Caco-2 (cell line): ENCODE measurements at regions of chr4 and their contacts with region 1.

Region 1: DNA sequence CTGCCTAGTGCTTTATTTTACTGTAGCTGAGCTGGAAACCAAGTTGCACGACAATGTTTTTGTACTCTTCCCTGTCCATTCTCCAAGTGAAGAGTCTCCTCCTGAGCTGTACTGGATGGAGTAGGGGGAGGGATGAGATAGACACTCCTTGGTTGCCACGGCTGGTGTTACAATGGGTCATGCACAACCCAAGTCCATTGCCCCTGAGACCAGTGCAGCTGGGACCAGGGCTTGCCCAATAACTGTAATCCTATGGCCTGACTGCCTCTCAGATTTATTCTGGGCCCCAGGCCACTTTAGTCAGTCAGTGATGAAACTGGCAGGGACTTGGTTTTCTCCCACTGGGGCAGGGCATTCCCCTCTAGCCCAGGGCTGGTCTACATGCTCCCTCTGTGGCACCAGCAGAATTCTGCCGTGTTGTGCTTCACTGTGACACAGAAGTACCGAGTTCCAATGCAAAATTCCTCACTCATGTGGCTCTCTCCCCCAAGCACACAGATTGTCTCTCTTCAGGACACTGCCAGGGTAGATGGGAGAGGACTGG is 203.3 kb upstream of the PCDH18 start:
- DNase-seq: no peak
- H3K4me3 ChIP-seq: no peak overlapping the region
- H3K4me3 Mint-ChIP-seq: no peak overlapping the region
- H3K27ac Mint-ChIP-seq: no peak overlapping the region
- H3K4me1 ChIP-seq: no peaks in the 10 kb centered on the region
- H3K4me1 Mint-ChIP-seq: peaks cover 6% of the 10 kb centered on the region
- H3K27me3 ChIP-seq: no peaks in the 10 kb centered on the region
- H3K27me3 Mint-ChIP-seq: no peaks in the 10 kb centered on the region
- CTCF ChIP-seq: no peak

Region 2: DNA sequence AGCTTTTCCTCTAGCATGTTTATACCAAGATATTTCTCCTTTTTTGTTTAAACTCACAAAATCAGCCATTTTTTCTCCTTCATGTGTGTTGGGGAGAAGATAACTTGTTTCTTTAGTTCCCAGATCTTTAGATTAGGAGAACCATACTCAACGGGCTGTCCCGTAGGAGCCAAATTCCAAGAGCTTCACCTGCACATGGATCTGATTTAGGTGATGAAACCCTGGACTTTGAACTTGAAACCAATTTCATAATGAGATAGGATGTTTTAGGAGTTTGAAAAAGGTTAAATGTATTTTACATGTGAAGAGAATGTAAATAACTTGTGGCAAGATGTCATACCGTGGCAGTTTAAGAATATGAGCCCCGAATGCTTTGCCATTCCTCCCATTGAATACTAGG is 76.6 kb after region 1 on chr4:
- CTCF ChIA-PET with region 1: no interaction called
- POLR2A ChIA-PET with region 1: no interaction called
- intact Hi-C with region 1: loop called (anchors 5 kb)
- DNase-seq: no peak
- H3K4me3 ChIP-seq: no peak overlapping the region
- H3K4me3 Mint-ChIP-seq: no peak overlapping the region
- H3K27ac Mint-ChIP-seq: no peak overlapping the region
- H3K4me1 ChIP-seq: no peaks in the 10 kb centered on the region
- H3K4me1 Mint-ChIP-seq: no peaks in the 10 kb centered on the region
- H3K27me3 ChIP-seq: no peaks in the 10 kb centered on the region
- H3K27me3 Mint-ChIP-seq: no peaks in the 10 kb centered on the region
- CTCF ChIP-seq: no peak

Region 3: DNA sequence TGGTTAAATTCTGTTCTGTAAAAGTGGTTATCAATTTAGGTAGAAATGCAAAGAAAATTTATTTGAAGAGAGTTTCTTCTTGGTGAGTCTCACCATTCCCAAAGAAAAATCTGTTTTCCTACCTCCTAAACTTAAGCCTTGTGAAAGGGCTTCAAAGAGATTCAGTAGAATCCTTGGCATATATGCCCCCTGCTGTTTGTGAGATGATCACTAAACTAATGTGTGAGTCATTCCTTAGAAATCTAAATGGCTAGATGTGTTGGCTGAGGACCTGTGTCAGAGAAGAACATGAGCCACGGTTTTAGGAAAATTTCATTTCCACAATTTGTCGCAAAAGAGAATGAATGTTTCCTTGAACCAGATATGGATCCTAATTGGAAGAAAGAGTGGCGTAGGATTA is 245.6 kb after region 1 on chr4:
- CTCF ChIA-PET with region 1: no interaction called
- POLR2A ChIA-PET with region 1: no interaction called
- intact Hi-C with region 1: loop called (anchors 2 kb)
- DNase-seq: no peak
- H3K4me3 ChIP-seq: no peak overlapping the region
- H3K4me3 Mint-ChIP-seq: no peak overlapping the region
- H3K27ac Mint-ChIP-seq: no peak overlapping the region
- H3K4me1 ChIP-seq: no peaks in the 10 kb centered on the region
- H3K4me1 Mint-ChIP-seq: no peaks in the 10 kb centered on the region
- H3K27me3 ChIP-seq: no peaks in the 10 kb centered on the region
- H3K27me3 Mint-ChIP-seq: peaks cover 4% of the 10 kb centered on the region
- CTCF ChIP-seq: no peak

Region 4: GRCh38 chr4:138182838-138183426 is 447.3 kb after region 1 on chr4:
- CTCF ChIA-PET with region 1: no interaction called
- POLR2A ChIA-PET with region 1: no interaction called
- intact Hi-C with region 1: loop called (anchors 5 kb)
- DNase-seq: peak in 1 of 2 experiments; percentile 45
- H3K4me3 ChIP-seq: no peak overlapping the region
- H3K4me3 Mint-ChIP-seq: no peak overlapping the region
- H3K27ac Mint-ChIP-seq: no peak overlapping the region
- H3K4me1 ChIP-seq: no peaks in the 10 kb centered on the region
- H3K4me1 Mint-ChIP-seq: no peaks in the 10 kb centered on the region
- H3K27me3 ChIP-seq: no peaks in the 10 kb centered on the region
- H3K27me3 Mint-ChIP-seq: no peaks in the 10 kb centered on the region
- CTCF ChIP-seq: peak; percentile 50 to 60

Region 5: DNA sequence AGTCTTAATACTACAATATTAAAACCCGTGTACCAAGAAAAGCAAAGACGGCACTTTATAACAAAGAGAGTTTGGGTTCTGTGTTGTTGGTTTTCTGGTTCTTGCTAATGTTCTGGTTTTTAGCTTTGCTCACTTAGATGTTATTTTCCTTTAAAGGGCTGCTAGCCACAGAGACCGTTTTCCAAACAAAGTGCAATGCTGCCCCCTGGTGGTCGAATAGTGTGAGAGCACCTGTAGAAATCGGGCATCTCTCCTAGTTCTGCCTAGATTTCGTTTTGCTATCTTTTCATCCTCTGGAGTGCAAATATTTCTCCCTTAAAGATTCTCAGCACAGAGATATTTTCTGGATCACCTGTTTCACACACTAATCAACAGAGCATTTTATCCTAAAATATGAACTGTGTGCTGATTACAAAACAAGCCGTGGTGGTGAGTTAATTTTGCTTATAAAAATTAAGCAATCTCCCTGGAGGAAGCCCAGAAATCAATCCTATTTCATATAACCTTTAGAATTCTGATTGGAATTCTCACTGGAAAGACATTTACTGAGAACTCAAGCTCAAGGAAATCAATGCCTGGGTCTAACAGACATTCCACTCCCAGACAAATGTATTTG is 945.5 kb after region 1 on chr4:
- CTCF ChIA-PET with region 1: no interaction called
- POLR2A ChIA-PET with region 1: no interaction called
- intact Hi-C with region 1: loop called (anchors 10 kb)
- DNase-seq: peak; percentile 63 to 79
- H3K4me3 ChIP-seq: no peak overlapping the region
- H3K4me3 Mint-ChIP-seq: no peak overlapping the region
- H3K27ac Mint-ChIP-seq: no peak overlapping the region
- H3K4me1 ChIP-seq: peaks cover 10% of the 10 kb centered on the region
- H3K4me1 Mint-ChIP-seq: peaks cover 11% of the 10 kb centered on the region
- H3K27me3 ChIP-seq: no peaks in the 10 kb centered on the region
- H3K27me3 Mint-ChIP-seq: no peaks in the 10 kb centered on the region
- CTCF ChIP-seq: peak; percentile 72 to 89